ENCODE measurements at regions of chr17 and their contacts with region 1.

Region 1: DNA sequence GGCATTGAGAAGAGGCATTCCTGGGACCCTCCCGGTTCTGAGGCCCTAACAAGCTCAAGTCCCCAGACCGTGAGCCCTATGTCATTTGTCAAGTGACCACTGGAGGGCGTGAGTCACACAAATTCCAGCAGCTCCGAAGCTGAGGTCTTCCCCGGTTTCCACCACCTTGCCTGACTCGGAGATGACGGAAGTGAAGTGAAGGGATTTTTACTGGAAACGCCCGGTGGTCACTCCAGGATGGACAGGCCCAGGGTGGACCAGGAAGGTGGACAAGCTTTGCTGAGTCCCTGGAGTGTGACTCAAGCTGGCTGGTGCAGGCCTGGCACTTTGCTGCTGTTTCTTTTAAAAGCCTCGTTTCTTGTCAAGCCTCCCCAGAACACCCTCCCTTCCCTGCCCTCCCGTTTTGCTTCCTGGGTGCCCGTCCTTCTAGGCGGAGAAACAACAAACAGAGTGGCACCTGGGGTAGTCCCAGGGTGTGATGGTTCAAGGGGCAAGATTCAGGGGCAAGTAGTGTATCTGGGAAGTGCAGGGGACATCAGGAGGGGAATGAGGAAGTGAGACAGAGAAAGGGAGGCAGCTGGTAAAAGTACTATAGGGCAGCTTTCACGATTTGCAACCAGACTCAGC is 5.3 kb upstream of the NOS2 start:
- DNase-seq: peak; percentile 88
- ATAC-seq: peak; percentile 54
- H3K4me3 Mint-ChIP-seq: peak overlapping the region; percentile 50
- H3K27ac Mint-ChIP-seq: peak overlapping the region; percentile 94
- H3K4me1 Mint-ChIP-seq: peaks cover 41% of the 10 kb centered on the region
- H3K27me3 Mint-ChIP-seq: no peaks in the 10 kb centered on the region

Region 2: DNA sequence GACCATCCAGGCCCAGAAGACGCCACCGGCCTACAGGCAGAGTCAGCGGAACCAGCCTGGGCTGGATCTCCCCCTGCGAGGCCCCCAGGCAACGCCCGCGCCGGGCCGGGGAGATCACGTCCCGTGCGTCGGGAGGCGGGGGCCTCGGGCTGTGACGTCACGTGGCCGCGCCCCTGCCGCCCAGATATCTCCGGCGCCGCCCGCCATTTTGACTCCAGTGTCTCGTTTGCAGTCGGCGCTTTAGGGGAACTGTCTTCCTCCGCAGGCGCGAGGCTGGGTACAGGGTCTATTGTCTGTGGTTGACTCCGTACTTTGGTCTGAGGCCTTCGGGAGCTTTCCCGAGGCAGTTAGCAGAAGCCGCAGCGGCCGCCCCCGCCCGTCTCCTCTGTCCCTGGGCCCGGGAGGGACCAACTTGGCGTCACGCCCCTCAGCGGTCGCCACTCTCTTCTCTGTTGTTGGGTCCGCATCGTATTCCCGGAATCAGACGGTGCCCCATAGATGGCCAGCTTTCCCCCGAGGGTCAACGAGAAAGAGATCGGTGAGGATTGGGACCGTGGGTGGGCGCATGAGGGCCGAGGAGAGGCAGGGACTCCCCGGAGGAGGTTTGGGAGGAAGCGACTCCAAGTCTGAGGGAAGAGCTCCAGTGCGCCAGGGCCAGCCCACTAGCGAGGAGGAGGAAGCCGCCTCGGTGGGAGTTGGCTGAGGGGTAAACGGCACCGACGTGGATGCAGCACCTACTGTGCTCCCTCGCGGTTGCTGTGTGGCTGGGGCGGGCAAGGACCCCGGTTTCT is 511.5 kb before region 1 on chr17 and contains the start of gene WSB1:
- CTCF ChIA-PET with region 1: interaction called, 4 read pairs
- POLR2A ChIA-PET with region 1: no interaction called
- intact Hi-C with region 1: loop called in 1 of 2 experiments (anchors 5 kb)
- DNase-seq: peak; percentile 96
- ATAC-seq: peak; percentile 86
- H3K4me3 Mint-ChIP-seq: peak within 1 kb of the TSS; percentile 89
- H3K27ac Mint-ChIP-seq: peak within 1 kb of the TSS; percentile 99
- H3K4me1 Mint-ChIP-seq: peaks cover 32% of the 10 kb centered on the region
- H3K27me3 Mint-ChIP-seq: no peaks in the 10 kb centered on the region
- total RNA-seq, gene WSB1: 145 to 190 TPM

Region 3: GRCh38 chr17:27818401-27819105 is 12.9 kb after region 1 on chr17:
- CTCF ChIA-PET with region 1: interaction called, 18 read pairs
- POLR2A ChIA-PET with region 1: no interaction called
- intact Hi-C with region 1: no loop called
- DNase-seq: no peak
- ATAC-seq: no peak
- H3K4me3 Mint-ChIP-seq: no peak overlapping the region
- H3K27ac Mint-ChIP-seq: no peak overlapping the region
- H3K4me1 Mint-ChIP-seq: no peaks in the 10 kb centered on the region
- H3K27me3 Mint-ChIP-seq: peaks cover 2% of the 10 kb centered on the region

Region 4: DNA sequence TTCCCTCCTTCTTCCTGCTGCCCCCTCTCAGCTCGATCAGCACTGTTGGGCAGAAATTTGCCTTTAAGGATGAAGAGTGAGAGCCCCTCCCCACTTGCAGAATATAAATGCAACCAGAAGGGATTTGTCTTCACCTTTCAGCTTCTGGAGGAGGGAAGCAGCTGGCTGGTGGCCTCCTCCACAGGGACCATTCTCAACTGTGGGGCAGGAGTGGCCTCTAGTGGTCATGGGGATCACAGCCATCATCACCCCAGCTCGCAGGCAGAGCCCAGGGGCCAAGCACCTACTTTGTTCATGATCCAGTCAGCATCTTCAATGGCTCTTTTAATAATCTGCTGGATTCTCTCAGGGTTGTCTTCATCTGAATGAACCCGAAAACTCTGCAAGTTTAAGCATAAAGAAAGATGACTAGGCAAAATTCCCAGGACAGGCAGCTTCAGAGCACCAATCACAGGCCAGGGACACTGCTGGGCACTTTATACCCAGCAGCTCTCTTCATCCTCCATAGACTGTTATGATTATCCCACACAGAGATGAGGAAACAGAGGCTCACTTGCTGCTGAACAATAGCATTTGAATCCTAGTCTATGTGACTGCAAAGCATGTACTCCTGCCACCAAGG is 74.5 kb after region 1 on chr17:
- CTCF ChIA-PET with region 1: interaction called, 320 read pairs
- POLR2A ChIA-PET with region 1: interaction called, 6 read pairs
- intact Hi-C with region 1: loop called (anchors 1 kb)
- DNase-seq: peak; percentile 85
- ATAC-seq: peak; percentile 91
- H3K4me3 Mint-ChIP-seq: no peak overlapping the region
- H3K27ac Mint-ChIP-seq: no peak overlapping the region
- H3K4me1 Mint-ChIP-seq: peaks cover 17% of the 10 kb centered on the region
- H3K27me3 Mint-ChIP-seq: no peaks in the 10 kb centered on the region

Region 5: DNA sequence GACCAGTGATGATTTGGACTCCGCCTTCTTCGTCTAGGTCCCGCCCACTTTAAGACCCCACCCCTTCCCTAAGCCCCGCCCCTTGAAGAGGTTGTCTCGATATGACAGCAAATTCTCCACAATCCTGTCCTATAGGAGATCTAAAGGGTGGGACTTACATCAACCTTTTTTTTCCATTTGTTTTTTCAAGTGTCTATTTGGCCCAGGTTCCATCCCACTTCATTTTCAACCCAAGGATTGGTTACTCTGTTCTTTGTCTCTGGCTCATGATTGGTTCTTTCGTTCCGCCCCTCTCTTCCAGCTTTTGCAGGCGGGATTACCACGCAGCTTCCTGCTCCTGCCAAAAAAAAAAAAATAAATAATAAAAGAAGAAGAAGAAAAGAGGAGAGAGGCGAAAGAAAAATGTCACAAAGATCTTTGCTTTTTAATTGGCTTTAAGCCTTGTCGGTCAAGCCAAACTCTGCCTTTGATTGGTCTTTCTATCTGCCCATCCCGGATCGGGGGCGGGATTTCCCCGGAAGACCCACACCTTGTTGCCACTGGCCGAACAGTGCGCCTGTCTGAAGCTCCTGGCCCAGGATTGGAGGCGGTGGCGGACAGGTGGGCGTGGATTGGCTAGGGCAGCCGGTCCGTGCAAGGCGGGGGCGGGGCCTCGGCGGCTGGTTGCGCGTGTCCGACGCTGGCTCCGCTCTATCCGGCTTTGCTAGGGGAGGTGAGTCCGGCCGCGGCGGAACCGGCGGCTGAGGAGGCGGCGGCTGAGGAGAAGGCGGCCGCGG is 235.6 kb after region 1 on chr17:
- CTCF ChIA-PET with region 1: interaction called, 3 read pairs
- POLR2A ChIA-PET with region 1: no interaction called
- intact Hi-C with region 1: loop called in 1 of 2 experiments (anchors 1 kb)
- DNase-seq: peak; percentile 100
- ATAC-seq: peak; percentile 96
- H3K4me3 Mint-ChIP-seq: peak overlapping the region; percentile 79
- H3K27ac Mint-ChIP-seq: peak overlapping the region; percentile 74
- H3K4me1 Mint-ChIP-seq: peaks cover 52% of the 10 kb centered on the region
- H3K27me3 Mint-ChIP-seq: no peaks in the 10 kb centered on the region

Region 6: GRCh38 chr17:28252436-28252835 is 446.8 kb after region 1 on chr17:
- CTCF ChIA-PET with region 1: interaction called, 8 read pairs
- POLR2A ChIA-PET with region 1: no interaction called
- intact Hi-C with region 1: loop called (anchors 1 kb)
- DNase-seq: no peak
- ATAC-seq: no peak
- H3K4me3 Mint-ChIP-seq: no peak overlapping the region
- H3K27ac Mint-ChIP-seq: no peak overlapping the region
- H3K4me1 Mint-ChIP-seq: peaks cover 5% of the 10 kb centered on the region
- H3K27me3 Mint-ChIP-seq: peaks cover 14% of the 10 kb centered on the region

Measured in activated CD4-positive, alpha-beta T cell treated with anti-CD3 and anti-CD28 coated beads for 36 hours (primary cell).